ENCODE measurements at regions of chr6 and their contacts with region 1.

Region 1: GRCh38 chr6:6736791-6737654 is 148.5 kb downstream of the LY86 start:
- DNase-seq: peak; percentile 75 to 91 (median 88)
- H3K4me3 ChIP-seq: peak overlapping the region in 2 of 4 donors; percentile 0 to 50
- H3K27ac ChIP-seq: peak overlapping the region; percentile 9 to 81 (median 64)
- H3K4me1 ChIP-seq: peaks cover 9 to 23% of the 10 kb centered on the region in 2 donors
- H3K27me3 ChIP-seq: no peaks in the 10 kb centered on the region
- CTCF ChIP-seq: no peak
- POLR2A ChIP-seq: peak in 1 of 2 donors; percentile 14

Region 2: GRCh38 chr6:6305575-6305974 is 431.4 kb before region 1 on chr6:
- intact Hi-C with region 1: no loop called
- DNase-seq: no peak
- H3K4me3 ChIP-seq: no peak overlapping the region
- H3K27ac ChIP-seq: no peak overlapping the region
- H3K4me1 ChIP-seq: no peaks in the 10 kb centered on the region
- H3K27me3 ChIP-seq: no peaks in the 10 kb centered on the region
- CTCF ChIP-seq: no peak
- POLR2A ChIP-seq: no peak

Region 3: DNA sequence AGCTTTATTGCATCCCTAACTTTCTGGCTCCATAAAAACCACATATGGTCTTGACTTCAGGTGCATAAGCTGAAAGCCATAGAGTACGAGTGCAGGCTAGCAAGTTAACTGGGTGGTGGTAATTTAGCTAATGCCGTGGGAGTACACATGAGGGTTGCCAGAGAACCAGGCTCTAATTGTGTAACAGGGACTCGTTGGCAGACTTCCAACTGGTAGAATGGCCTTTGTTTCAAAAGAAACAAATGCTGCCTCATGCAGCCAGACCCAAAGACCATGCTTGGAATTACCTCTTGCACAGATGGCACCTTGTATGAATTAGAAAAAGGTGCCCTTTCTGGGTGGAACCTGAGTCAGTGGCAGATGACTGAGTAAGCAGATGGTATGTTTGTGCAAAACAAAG is 75.3 kb before region 1 on chr6:
- intact Hi-C with region 1: no loop called
- DNase-seq: peak; percentile 63 to 88 (median 69)
- H3K4me3 ChIP-seq: no peak overlapping the region
- H3K27ac ChIP-seq: no peak overlapping the region
- H3K4me1 ChIP-seq: peaks cover 4 to 25% of the 10 kb centered on the region in 2 donors
- H3K27me3 ChIP-seq: no peaks in the 10 kb centered on the region
- CTCF ChIP-seq: no peak
- POLR2A ChIP-seq: no peak

Region 4: DNA sequence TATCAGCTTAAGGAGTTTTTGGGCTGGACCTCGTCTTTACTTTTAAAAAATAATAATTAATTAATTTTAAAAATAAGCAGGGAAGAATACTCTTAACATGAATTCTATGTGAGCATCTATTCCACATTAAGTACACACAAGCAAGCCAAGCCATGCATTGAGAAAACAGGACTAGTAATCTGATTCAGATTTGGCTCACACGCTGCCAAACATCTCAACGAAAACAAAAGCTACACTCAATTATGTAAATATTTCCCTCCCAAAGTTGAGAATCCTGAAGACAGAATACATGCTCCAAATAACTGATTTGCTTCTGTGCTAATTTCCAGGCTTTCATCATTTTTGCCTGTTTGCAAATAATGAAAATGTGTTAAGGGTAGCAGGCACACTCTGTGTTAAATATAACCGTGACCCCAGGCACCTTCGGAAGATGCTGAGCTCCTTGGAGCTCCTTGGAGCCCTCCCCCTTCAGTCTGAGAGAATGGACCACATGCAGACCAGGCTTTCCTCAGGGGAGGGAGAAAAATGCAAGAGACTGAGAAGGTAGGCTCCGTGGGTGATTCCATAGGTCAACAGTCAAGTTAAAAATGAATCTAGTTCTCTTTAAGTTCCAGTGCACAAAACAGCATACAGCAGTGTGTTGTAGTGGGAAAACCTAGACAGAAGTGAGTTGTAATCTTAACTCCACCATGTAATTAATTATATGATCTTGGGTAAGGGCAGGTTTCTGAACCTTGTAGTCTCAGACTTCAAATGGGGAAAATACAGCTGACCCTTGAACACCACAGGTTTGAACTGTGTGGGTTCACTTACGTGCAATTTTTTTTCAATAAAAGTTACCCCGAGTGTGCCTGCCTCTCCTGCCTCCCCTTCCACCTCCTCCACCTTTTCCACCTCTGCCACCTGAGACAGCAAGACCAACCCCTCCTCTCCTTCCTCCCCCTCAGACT is 209.5 kb after region 1 on chr6:
- intact Hi-C with region 1: no loop called
- DNase-seq: no peak
- H3K4me3 ChIP-seq: no peak overlapping the region
- H3K27ac ChIP-seq: no peak overlapping the region
- H3K4me1 ChIP-seq: no peaks in the 10 kb centered on the region
- H3K27me3 ChIP-seq: no peaks in the 10 kb centered on the region
- CTCF ChIP-seq: no peak
- POLR2A ChIP-seq: no peak

Region 5: DNA sequence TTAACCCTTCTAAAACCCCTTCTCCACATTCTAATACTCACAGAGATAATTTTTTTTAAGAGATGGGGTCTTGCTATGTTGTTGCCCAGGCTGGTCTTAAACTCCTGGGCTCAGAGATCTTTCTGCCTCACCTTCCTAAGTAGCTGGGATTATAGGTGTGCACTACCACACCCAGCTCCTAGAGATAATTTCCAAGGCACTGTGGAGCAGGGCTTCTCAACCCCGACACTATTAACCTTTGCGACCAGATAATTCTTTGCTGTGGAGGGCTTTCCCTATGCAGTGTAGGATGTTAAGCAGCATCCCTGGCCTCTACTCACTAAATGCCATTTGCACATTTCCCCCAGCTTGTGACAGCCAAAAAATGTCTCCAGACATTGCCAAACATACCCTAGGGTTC is 362.0 kb after region 1 on chr6:
- intact Hi-C with region 1: loop called in 1 of 2 experiments (anchors 10 kb)
- DNase-seq: no peak
- H3K4me3 ChIP-seq: no peak overlapping the region
- H3K27ac ChIP-seq: no peak overlapping the region
- H3K4me1 ChIP-seq: no peaks in the 10 kb centered on the region
- H3K27me3 ChIP-seq: no peaks in the 10 kb centered on the region
- CTCF ChIP-seq: no peak
- POLR2A ChIP-seq: no peak

Measured in adrenal gland (tissue), 19 donors.